ENCODE measurements at regions of chr17 and their contacts with region 1.

Region 1: DNA sequence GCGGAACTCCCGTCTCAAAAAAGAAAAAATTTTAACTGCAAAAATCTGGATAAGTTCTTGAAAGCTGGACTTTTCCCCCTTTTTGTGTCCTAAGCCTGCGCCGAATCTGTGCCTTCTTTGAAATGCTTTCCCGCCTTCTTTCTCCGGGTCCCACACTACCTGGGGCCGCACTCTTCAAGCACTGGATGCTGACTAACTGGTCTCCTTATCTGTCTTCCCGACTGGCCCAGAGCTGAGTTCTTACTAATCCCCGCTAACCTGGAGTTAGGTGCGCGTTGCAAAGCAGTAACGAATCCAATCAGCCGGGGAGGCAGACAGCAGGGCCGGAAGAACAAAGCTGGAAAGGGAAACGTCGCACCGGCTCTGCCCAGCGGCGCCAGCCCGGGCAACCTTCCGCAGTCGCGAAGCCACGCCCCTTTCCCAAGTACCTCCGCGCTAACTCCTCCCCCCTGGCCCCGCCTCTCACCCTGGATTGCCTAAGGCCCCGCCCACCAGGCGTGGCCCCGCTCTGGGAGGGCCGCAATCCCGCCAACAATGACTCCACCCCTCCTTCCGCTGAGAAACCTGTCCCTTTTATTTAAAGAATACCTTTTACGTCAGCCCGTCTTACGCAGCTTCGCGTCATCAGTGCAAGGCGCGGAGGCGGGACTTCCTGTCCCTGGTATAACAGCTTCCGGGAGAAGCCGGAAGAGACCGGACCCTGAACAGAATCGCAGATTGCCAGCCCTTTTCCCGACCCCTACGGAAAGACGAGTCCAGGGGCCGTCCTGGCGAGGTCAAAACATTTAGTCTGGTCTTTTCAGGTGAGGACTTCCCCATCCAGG is at the start of gene TMUB2:
- DNase-seq: peak; percentile 100
- ATAC-seq: peak; percentile 97
- H3K4me3 ChIP-seq: peak within 1 kb of the TSS; percentile 63 to 99 (median 90)
- H3K4me3 Mint-ChIP-seq: peak within 1 kb of the TSS; percentile 98
- H3K27ac ChIP-seq: peak within 1 kb of the TSS; percentile 93 to 97
- H3K27ac Mint-ChIP-seq: peak within 1 kb of the TSS; percentile 100
- H3K4me1 ChIP-seq: peaks cover 22 to 26% of the 10 kb centered on the region in 2 donors
- H3K4me1 Mint-ChIP-seq: peaks cover 40% of the 10 kb centered on the region
- H3K27me3 ChIP-seq: no peaks in the 10 kb centered on the region
- H3K27me3 Mint-ChIP-seq: no peaks in the 10 kb centered on the region
- CTCF ChIP-seq: no peak
- total RNA-seq, gene TMUB2: 50.9 and 52.3 TPM in 2 replicates

Region 2: DNA sequence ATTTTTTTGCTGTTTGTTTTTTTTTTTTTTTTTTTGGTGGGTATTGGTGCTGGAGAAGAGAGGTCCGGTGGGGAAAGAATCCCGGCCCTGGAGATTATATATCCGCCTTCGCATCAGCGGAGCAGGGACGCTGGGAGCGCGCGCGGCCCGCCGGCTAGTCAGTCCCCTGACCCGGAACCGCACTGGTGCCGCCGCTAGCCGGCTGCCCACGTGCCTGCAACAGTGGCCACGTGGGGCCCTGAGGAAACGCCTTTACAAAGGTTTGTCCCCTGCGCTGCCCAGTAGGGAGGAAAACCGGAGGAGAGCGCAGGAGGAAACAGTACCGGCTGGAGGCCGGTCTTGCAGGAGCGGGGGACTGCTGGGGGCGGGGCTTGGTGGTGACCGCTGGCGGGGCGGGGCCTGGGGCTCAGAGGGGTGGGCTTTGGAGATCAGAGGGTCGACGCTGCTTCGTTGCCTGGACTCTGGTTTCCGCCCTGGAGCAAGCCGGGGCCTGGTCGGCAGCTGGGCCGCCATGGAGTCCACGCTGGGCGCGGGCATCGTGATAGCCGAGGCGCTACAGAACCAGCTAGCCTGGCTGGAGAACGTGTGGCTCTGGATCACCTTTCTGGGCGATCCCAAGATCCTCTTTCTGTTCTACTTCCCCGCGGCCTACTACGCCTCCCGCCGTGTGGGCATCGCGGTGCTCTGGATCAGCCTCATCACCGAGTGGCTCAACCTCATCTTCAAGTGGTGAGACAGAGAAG is 115.9 kb before region 1 on chr17 and contains the start of gene G6PC3:
- CTCF ChIA-PET with region 1: no interaction called
- POLR2A ChIA-PET with region 1: no interaction called
- intact Hi-C with region 1: loop called (anchors 1 kb)
- DNase-seq: peak; percentile 85
- ATAC-seq: peak; percentile 73
- H3K4me3 ChIP-seq: peak within 1 kb of the TSS; percentile 42 to 87 (median 73)
- H3K4me3 Mint-ChIP-seq: peak within 1 kb of the TSS; percentile 93
- H3K27ac ChIP-seq: peak within 1 kb of the TSS; percentile 31 to 65
- H3K27ac Mint-ChIP-seq: peak within 1 kb of the TSS; percentile 82
- H3K4me1 ChIP-seq: peaks cover 22 to 32% of the 10 kb centered on the region in 2 donors
- H3K4me1 Mint-ChIP-seq: peaks cover 36% of the 10 kb centered on the region
- H3K27me3 ChIP-seq: no peaks in the 10 kb centered on the region
- H3K27me3 Mint-ChIP-seq: no peaks in the 10 kb centered on the region
- CTCF ChIP-seq: no peak
- total RNA-seq, gene G6PC3: 26.7 and 28.5 TPM in 2 replicates

Region 3: GRCh38 chr17:44141717-44142285 is 44.7 kb before region 1 on chr17 and contains the start of gene HROB:
- CTCF ChIA-PET with region 1: interaction called, 4 read pairs
- POLR2A ChIA-PET with region 1: interaction called, 5 read pairs
- intact Hi-C with region 1: loop called (anchors 1 kb)
- DNase-seq: peak; percentile 97
- ATAC-seq: peak; percentile 99
- H3K4me3 ChIP-seq: peak within 1 kb of the TSS; percentile 41 to 85 (median 76)
- H3K4me3 Mint-ChIP-seq: peak within 1 kb of the TSS; percentile 87
- H3K27ac ChIP-seq: peak within 1 kb of the TSS; percentile 57 to 84
- H3K27ac Mint-ChIP-seq: peak within 1 kb of the TSS; percentile 61
- H3K4me1 ChIP-seq: peaks cover 9 to 11% of the 10 kb centered on the region in 2 donors
- H3K4me1 Mint-ChIP-seq: peaks cover 8% of the 10 kb centered on the region
- H3K27me3 ChIP-seq: peaks cover 0 to 20% (median 3%) of the 10 kb centered on the region in 4 experiments
- H3K27me3 Mint-ChIP-seq: peaks cover 14% of the 10 kb centered on the region
- CTCF ChIP-seq: peak; percentile 84
- total RNA-seq, gene HROB: 2.7 and 3.2 TPM in 2 replicates

Region 4: GRCh38 chr17:44210342-44211192 is 24.0 kb after region 1 on chr17:
- CTCF ChIA-PET with region 1: interaction called, 26 read pairs
- POLR2A ChIA-PET with region 1: interaction called, 4 read pairs
- intact Hi-C with region 1: no loop called
- DNase-seq: peak; percentile 93
- ATAC-seq: peak; percentile 98
- H3K4me3 ChIP-seq: no peak overlapping the region
- H3K4me3 Mint-ChIP-seq: peak overlapping the region; percentile 34
- H3K27ac ChIP-seq: peak overlapping the region; percentile 41 to 71
- H3K27ac Mint-ChIP-seq: peak overlapping the region; percentile 74
- H3K4me1 ChIP-seq: peaks cover 29 to 49% of the 10 kb centered on the region in 2 donors
- H3K4me1 Mint-ChIP-seq: peaks cover 46% of the 10 kb centered on the region
- H3K27me3 ChIP-seq: no peaks in the 10 kb centered on the region
- H3K27me3 Mint-ChIP-seq: no peaks in the 10 kb centered on the region
- CTCF ChIP-seq: peak; percentile 99

Measured in B cell (primary cell).